GM13977 (cell line): ENCODE measurements at regions of chr10 and their contacts with region 1.

Region 1: GRCh38 chr10:97726636-97727178 is 10.2 kb upstream of the ZFYVE27 start:
- DNase-seq: no peak
- CTCF ChIP-seq: no peak

Region 2: GRCh38 chr10:97676770-97677581 is 49.7 kb before region 1 on chr10:
- in situ Hi-C with region 1: loop called (anchors 10 kb)
- DNase-seq: peak; percentile 83
- CTCF ChIP-seq: peak; percentile 78

Region 3: DNA sequence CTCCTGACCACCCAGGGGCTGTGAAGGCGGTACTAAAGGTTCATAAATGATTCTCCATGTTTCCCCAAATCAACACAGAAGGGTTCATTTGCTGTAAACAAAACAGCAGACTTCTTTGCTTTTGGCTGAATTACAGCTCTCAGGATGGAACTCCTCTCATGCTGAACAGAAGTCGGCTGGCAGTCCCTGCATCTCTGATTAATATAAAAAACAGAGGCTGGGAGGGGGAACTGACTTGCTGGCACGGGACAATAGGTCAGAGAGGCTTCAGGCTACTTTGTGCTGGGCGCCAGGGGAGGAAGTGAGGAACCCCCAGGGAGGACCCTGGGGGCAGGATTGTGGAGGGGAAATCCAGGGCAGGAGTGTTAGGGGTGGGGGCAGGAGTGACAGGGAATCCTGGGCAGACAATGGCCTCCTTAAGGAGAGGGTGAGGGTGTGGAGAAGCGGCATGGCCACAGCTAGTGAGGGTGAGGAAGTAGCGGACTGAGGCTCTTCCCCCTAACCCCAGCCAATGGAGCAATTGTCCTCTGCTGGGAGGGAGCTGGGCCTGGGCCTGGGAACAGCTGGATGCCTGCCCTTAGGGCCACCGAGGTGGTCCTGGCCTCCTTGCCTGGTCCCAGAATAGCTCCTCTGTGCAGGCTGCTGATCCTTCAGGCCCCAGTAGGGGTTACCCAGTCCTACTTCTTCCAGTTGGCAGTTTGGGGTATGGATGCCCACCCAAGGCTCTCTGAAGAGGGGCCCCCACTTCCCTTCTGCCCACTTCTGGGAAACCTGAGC is 54.3 kb after region 1 on chr10:
- in situ Hi-C with region 1: no loop called
- DNase-seq: no peak
- CTCF ChIP-seq: no peak